Lower lobe of right lung (tissue), 2 donors: ENCODE measurements at regions of chr7 and their contacts with region 1.

Region 1: DNA sequence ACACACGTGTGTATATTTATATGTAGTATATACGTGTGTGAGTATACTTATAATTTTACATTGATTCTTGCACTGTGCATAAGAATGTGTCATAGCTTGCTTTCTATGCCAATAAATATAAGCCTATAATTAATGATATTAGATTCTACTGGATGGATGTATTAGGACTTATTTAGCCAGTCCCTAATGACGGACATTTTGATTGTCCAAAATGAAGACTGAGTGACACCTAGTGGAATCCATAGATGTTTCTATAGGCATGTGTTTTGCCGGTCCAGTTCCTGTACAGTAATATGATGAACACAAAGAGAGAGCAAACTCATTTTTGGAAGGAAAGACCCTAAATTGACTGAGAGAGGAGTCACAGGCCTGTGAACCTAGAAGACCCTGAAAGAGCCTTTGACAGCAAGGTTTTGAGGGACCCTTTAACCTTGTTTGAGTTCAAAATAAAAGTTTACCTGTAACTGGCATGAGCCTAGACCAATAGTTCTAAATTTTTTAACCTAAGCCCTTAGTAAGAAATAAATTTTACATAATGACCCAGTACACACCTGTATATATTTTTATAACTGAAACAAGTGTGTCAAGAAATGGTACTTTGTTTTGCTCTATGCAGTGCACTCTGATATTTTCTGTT is 42.4 kb upstream of the AGBL3 start:
- DNase-seq: no peak
- ATAC-seq: peak in 1 of 2 donors; percentile 52
- H3K4me3 ChIP-seq: no peak overlapping the region
- H3K27ac ChIP-seq: no peak overlapping the region
- H3K4me1 ChIP-seq: peaks cover 8% of the 10 kb centered on the region
- H3K27me3 ChIP-seq: no peaks in the 10 kb centered on the region
- CTCF ChIP-seq: peak; percentile 30

Region 2: GRCh38 chr7:134632937-134633540 is 310.8 kb before region 1 on chr7:
- intact Hi-C with region 1: loop called (anchors 10 kb)
- DNase-seq: no peak
- ATAC-seq: peak; percentile 38 to 72
- H3K4me3 ChIP-seq: no peak overlapping the region
- H3K27ac ChIP-seq: no peak overlapping the region
- H3K4me1 ChIP-seq: peaks cover 21% of the 10 kb centered on the region
- H3K27me3 ChIP-seq: no peaks in the 10 kb centered on the region
- CTCF ChIP-seq: peak; percentile 65